A549 (cell line): ENCODE measurements at regions of chr19 and their contacts with region 1.

Region 1: DNA sequence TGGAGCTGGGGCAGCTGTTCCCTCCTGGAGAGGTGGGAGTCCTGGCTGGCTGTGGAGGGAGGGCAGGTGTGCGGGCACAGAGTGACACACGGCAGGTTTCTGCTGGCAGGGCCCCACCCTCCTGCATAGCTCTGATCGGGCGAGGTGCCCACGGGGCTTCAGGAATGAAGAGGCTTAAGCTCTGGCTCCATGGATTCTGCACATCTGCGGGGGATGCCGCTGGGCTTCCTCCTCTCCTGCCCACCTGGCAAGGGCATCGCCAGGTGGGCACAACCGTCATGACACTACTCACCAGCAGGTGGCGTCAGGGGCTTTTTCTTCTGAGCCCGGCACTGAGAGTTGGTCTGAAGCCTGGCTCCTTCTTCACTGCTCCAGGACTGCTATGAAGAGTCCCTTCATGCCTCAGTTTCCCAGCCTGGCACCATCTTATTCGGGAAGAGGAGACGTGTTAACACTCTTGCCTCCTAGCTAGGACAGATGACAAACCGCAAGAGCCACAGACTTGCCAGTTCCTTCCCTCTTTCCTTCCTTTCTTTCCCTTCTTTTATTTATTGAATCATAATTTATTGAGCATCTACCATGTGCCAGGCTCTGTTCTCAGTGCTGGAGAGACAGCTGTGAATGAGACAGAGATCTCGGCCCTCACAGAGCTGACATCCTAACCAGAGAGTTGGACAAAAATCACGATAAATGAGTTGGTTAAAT is 15.2 kb upstream of the PAK4 start:
- DNase-seq: peak; percentile 72 to 95
- ATAC-seq: peak; percentile 47 to 73; a peak in 5 of 6 replicates
- H3K4me3 ChIP-seq: no peak overlapping the region
- H3K27ac ChIP-seq: peak overlapping the region; percentile 89 to 90
- H3K4me1 ChIP-seq: peaks cover 40% of the 10 kb centered on the region
- CTCF ChIP-seq: peak; percentile 99
- EP300 ChIP-seq: no peak
- POLR2A ChIP-seq: no peak
- RAD21 ChIP-seq: peak; percentile 91

Region 2: GRCh38 chr19:38763795-38764220 is 346.6 kb before region 1 on chr19:
- CTCF ChIA-PET with region 1: no interaction called
- POLR2A ChIA-PET with region 1: no interaction called
- DNase-seq: no peak
- ATAC-seq: peak; percentile 57 to 58; a peak in 5 of 6 replicates
- H3K4me3 ChIP-seq: no peak overlapping the region
- H3K27ac ChIP-seq: peak overlapping the region; percentile 53 to 85
- H3K4me1 ChIP-seq: peaks cover 17% of the 10 kb centered on the region
- CTCF ChIP-seq: no peak
- EP300 ChIP-seq: no peak
- POLR2A ChIP-seq: no peak
- RAD21 ChIP-seq: no peak

Region 3: GRCh38 chr19:38964738-38965137 is 145.7 kb before region 1 on chr19:
- CTCF ChIA-PET with region 1: interaction called, 38 read pairs
- POLR2A ChIA-PET with region 1: no interaction called
- DNase-seq: no peak
- ATAC-seq: no peak
- H3K4me3 ChIP-seq: no peak overlapping the region
- H3K27ac ChIP-seq: no peak overlapping the region
- H3K4me1 ChIP-seq: peaks cover 21% of the 10 kb centered on the region
- CTCF ChIP-seq: no peak
- EP300 ChIP-seq: no peak
- POLR2A ChIP-seq: no peak
- RAD21 ChIP-seq: no peak

Region 4: GRCh38 chr19:39046118-39046821 is 64.1 kb before region 1 on chr19:
- CTCF ChIA-PET with region 1: interaction called, 144 read pairs
- POLR2A ChIA-PET with region 1: no interaction called
- DNase-seq: peak in 1 of 2 experiments; percentile 87
- ATAC-seq: peak; percentile 87 to 93
- H3K4me3 ChIP-seq: no peak overlapping the region
- H3K27ac ChIP-seq: peak overlapping the region in 1 of 2 experiments; percentile 24; a peak in 3 of 6 replicates
- H3K4me1 ChIP-seq: peaks cover 5% of the 10 kb centered on the region; the same call in 1 of the 3 replicates
- CTCF ChIP-seq: no peak
- EP300 ChIP-seq: no peak
- POLR2A ChIP-seq: no peak
- RAD21 ChIP-seq: no peak

Region 5: DNA sequence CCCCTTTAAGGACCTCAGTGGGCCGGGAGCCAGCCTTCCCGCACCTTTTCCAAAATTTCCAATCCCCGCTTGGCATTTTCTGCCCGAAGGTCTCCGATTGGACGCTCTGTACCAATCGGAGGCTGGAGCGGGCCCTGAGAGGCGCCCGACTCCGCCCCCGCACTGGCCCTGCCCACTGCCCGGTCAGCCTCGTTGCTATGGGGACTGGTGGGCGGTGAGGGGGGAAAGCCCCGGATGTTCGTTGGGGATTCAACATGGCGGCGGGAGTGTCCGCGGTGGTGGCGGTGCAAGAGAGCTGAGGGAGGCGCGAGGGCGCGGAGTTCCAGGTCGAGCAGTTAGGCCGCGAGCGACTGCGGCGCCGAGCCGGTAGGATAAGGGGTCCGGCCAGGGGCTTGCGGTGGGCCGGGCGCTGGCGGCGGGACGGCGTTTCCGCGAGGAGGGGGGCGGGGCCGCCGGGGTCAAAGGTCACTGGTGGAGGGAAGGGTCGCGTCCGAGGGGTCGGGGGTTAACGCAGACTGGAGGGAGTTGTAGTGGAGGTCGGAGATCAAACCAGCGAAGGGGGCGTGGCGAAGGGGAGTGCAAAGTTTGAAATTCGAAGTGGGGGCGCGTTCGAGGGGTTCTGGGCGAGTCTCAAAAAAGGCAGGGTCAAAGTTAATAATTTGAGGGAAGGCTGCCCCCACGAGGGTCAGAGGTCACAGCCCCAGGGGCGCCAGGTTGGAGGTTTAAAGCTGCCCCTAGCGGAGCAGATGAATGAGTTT is 15.3 kb after region 1 on chr19 and contains the start of gene PAK4:
- CTCF ChIA-PET with region 1: interaction called, 224 read pairs
- POLR2A ChIA-PET with region 1: interaction called, 8 read pairs
- DNase-seq: peak; percentile 99 to 100
- ATAC-seq: peak; percentile 81 to 89
- H3K4me3 ChIP-seq: peak within 1 kb of the TSS; percentile 84
- H3K27ac ChIP-seq: peak within 1 kb of the TSS; percentile 92 to 94
- H3K4me1 ChIP-seq: peaks cover 61% of the 10 kb centered on the region
- CTCF ChIP-seq: no peak
- EP300 ChIP-seq: no peak
- POLR2A ChIP-seq: peak; percentile 95
- RAD21 ChIP-seq: peak in 1 of 2 experiments; percentile 23; a peak in 1 of 5 replicates
- polyA plus RNA-seq, gene PAK4: 37.9 and 42.9 TPM in 2 replicates

Region 6: GRCh38 chr19:39150845-39151600 is 40.6 kb after region 1 on chr19:
- CTCF ChIA-PET with region 1: interaction called, 17 read pairs
- POLR2A ChIA-PET with region 1: no interaction called
- DNase-seq: no peak
- ATAC-seq: no peak
- H3K4me3 ChIP-seq: no peak overlapping the region
- H3K27ac ChIP-seq: no peak overlapping the region
- H3K4me1 ChIP-seq: peaks cover 16% of the 10 kb centered on the region
- CTCF ChIP-seq: no peak
- EP300 ChIP-seq: no peak
- POLR2A ChIP-seq: no peak
- RAD21 ChIP-seq: no peak

Region 7: GRCh38 chr19:39199025-39199424 is 88.6 kb after region 1 on chr19:
- CTCF ChIA-PET with region 1: interaction called, 10 read pairs
- POLR2A ChIA-PET with region 1: no interaction called
- DNase-seq: no peak
- ATAC-seq: peak in 1 of 2 experiments; percentile 40; a peak in 3 of 6 replicates
- H3K4me3 ChIP-seq: no peak overlapping the region
- H3K27ac ChIP-seq: peak overlapping the region in 1 of 2 experiments; percentile 13; a peak in 2 of 6 replicates
- H3K4me1 ChIP-seq: peaks cover 29% of the 10 kb centered on the region
- CTCF ChIP-seq: no peak
- EP300 ChIP-seq: no peak
- POLR2A ChIP-seq: no peak
- RAD21 ChIP-seq: no peak

Region 8: GRCh38 chr19:39341719-39342604 is 231.5 kb after region 1 on chr19 and contains the start of gene SAMD4B:
- CTCF ChIA-PET with region 1: interaction called, 11 read pairs
- POLR2A ChIA-PET with region 1: interaction called, 4 read pairs
- DNase-seq: peak; percentile 99 to 100
- ATAC-seq: peak; percentile 90 to 97
- H3K4me3 ChIP-seq: peak within 1 kb of the TSS; percentile 90
- H3K27ac ChIP-seq: peak within 1 kb of the TSS; percentile 85 to 94
- H3K4me1 ChIP-seq: peaks cover 22% of the 10 kb centered on the region
- CTCF ChIP-seq: peak; percentile 96
- EP300 ChIP-seq: peak in 1 of 2 experiments; percentile 9; a peak in 1 of 5 replicates
- POLR2A ChIP-seq: peak; percentile 97
- RAD21 ChIP-seq: peak; percentile 31 to 60; a peak in 4 of 5 replicates
- polyA plus RNA-seq, gene SAMD4B: 82.1 and 101 TPM in 2 replicates